Mammary epithelial cell (primary cell): ENCODE measurements at regions of chr21 and their contacts with region 1.

Region 1: GRCh38 chr21:42145569-42146272 is 73.2 kb upstream of the ABCG1 start:
- DNase-seq: peak; percentile 29
- H3K4me3 ChIP-seq: no peak overlapping the region
- H3K27ac ChIP-seq: no peak overlapping the region
- H3K4me1 ChIP-seq: no peaks in the 10 kb centered on the region
- H3K27me3 ChIP-seq: no peaks in the 10 kb centered on the region
- CTCF ChIP-seq: peak; percentile 92

Region 2: DNA sequence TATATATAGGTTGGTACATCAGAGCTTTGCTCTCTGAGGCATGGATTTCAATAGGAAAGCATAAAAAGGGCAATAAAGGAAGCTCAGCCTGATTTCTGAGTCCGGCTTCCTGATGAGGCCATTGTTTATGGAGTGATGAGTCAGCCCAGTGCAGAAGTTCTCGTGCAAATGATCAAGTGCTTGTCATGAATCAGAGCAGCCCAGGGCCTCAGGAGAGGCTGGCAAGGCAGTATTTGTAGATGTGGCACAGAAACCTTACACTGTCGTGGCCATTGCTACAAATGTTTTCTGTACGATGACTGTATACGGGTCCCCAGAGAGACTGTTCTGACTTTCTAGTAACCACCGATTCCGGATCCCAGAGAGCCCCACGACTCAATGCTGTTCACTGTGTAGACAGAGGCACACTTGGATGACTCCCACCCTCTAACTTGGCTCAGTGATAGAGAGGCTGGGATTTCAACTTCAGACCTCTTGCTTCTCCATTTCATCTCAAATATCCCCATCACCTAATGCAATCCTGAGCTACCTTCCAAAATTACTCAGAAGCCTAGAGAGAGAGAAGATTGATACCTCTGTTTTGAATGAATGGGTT is 47.8 kb before region 1 on chr21:
- CTCF ChIA-PET with region 1: no interaction called
- dilution Hi-C with region 1: loop called (anchors 5 kb)
- in situ Hi-C with region 1: no loop called
- intact Hi-C with region 1: no loop called
- DNase-seq: peak; percentile 94
- H3K4me3 ChIP-seq: no peak overlapping the region
- H3K27ac ChIP-seq: peak overlapping the region; percentile 81
- H3K4me1 ChIP-seq: peaks cover 17% of the 10 kb centered on the region
- H3K27me3 ChIP-seq: no peaks in the 10 kb centered on the region
- CTCF ChIP-seq: no peak

Region 3: GRCh38 chr21:42258153-42258884 is 112.6 kb after region 1 on chr21:
- CTCF ChIA-PET with region 1: no interaction called
- dilution Hi-C with region 1: no loop called
- in situ Hi-C with region 1: loop called (anchors 10 kb)
- intact Hi-C with region 1: loop called (anchors 1 kb)
- DNase-seq: peak; percentile 31
- H3K4me3 ChIP-seq: no peak overlapping the region
- H3K27ac ChIP-seq: no peak overlapping the region
- H3K4me1 ChIP-seq: no peaks in the 10 kb centered on the region
- H3K27me3 ChIP-seq: no peaks in the 10 kb centered on the region
- CTCF ChIP-seq: peak; percentile 73 to 91

Region 4: DNA sequence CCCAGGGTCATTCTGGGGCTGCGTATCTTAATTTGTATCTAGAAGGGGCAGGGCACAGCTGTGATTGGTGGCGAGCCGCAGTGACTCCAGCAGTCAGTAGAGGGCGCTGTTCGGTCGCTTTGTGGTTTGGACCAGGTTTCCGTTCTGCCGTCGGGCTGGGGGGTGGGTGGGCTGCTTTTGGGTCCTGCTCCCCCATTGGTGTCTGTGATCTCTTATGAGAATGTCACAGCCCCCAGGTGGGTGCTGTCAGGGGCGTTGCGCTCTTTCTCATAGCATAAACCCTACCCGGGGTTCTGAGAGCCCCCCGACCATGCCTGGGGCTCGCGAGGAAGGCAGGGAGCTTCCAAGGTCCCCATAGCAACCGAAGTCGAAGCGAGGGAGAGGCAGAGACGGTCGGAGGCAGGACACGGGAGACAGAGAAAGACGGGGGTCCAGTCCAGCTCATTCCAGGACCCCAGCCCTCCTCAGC is 164.1 kb after region 1 on chr21:
- CTCF ChIA-PET with region 1: no interaction called
- dilution Hi-C with region 1: no loop called
- in situ Hi-C with region 1: no loop called
- intact Hi-C with region 1: loop called (anchors 2 kb)
- DNase-seq: no peak
- H3K4me3 ChIP-seq: no peak overlapping the region
- H3K27ac ChIP-seq: no peak overlapping the region
- H3K4me1 ChIP-seq: no peaks in the 10 kb centered on the region
- H3K27me3 ChIP-seq: no peaks in the 10 kb centered on the region
- CTCF ChIP-seq: peak; percentile 70 to 80

Region 5: DNA sequence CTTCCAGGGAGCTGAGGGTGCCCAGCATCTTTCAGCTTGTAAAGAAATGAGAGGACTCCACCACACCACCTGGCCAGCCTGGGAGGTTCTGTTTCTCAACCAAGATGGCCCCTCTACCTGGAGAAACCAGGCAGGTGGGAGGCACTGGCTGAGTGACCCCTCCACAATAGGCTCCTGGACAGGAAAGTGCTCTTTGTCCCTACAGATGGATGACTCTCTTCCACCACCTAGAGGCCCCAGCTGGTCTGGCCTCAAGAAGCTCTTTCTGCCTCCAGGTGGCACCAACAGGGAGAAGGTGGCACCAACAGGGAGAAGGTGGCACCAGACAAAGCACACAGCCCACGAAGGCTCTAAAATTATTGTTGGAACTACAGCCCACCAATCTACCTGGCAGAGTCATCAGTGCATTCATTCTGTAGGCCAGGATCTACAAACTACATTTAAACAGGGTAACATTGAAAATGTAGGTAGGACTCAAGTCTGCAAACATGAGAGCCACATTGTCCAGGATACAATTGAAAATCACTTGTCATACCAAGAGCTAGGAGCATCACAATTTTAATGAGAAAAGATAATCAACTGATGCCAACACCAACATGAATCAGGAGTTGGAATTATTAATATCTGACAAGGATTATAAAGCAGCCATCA is 235.7 kb after region 1 on chr21:
- CTCF ChIA-PET with region 1: no interaction called
- dilution Hi-C with region 1: no loop called
- in situ Hi-C with region 1: no loop called
- intact Hi-C with region 1: loop called (anchors 1 kb)
- DNase-seq: peak; percentile 48
- H3K4me3 ChIP-seq: no peak overlapping the region
- H3K27ac ChIP-seq: no peak overlapping the region
- H3K4me1 ChIP-seq: no peaks in the 10 kb centered on the region
- H3K27me3 ChIP-seq: no peaks in the 10 kb centered on the region
- CTCF ChIP-seq: peak; percentile 72 to 94

Region 6: GRCh38 chr21:42513985-42514882 is 368.5 kb after region 1 on chr21:
- CTCF ChIA-PET with region 1: no interaction called
- dilution Hi-C with region 1: no loop called
- in situ Hi-C with region 1: no loop called
- intact Hi-C with region 1: loop called (anchors 10 kb)
- DNase-seq: peak; percentile 39
- H3K4me3 ChIP-seq: peak overlapping the region; percentile 66 to 72 (median 70)
- H3K27ac ChIP-seq: peak overlapping the region; percentile 48
- H3K4me1 ChIP-seq: peaks cover 27% of the 10 kb centered on the region
- H3K27me3 ChIP-seq: no peaks in the 10 kb centered on the region
- CTCF ChIP-seq: no peak

Region 7: GRCh38 chr21:42818328-42818749 is 672.6 kb after region 1 on chr21:
- CTCF ChIA-PET with region 1: no interaction called
- dilution Hi-C with region 1: no loop called
- in situ Hi-C with region 1: no loop called
- intact Hi-C with region 1: loop called (anchors 10 kb)
- DNase-seq: peak; percentile 45
- H3K4me3 ChIP-seq: no peak overlapping the region
- H3K27ac ChIP-seq: no peak overlapping the region
- H3K4me1 ChIP-seq: no peaks in the 10 kb centered on the region
- H3K27me3 ChIP-seq: no peaks in the 10 kb centered on the region
- CTCF ChIP-seq: peak; percentile 92 to 93